Naive thymus-derived CD4-positive, alpha-beta T cell (primary cell): ENCODE measurements at regions of chr4 and their contacts with region 1.

Region 1: DNA sequence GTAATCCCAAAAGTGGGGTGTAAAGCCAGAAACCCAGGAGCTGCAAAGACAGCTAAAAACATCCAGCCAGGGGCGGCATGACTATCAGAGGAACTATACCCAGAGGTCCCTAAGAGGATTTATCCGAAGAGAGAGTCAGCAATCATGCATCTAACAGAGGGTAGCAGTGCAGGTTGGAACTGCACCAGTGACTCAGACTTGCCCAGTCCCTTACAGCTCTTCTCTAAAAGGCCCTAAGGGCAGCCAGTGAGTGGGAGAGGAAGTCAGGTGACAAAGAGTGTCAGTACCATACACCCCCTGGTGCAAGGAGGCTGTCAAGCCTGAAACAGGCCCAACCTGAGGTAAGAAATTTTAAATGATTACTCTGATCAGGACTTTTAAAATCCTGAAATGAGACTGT is 88.1 kb downstream of the CAMK2D start:
- DNase-seq: peak in 1 of 9 donors; percentile 42
- ATAC-seq: peak; percentile 68
- H3K4me3 ChIP-seq: no peak overlapping the region
- H3K4me3 Mint-ChIP-seq: peak overlapping the region in 5 of 10 donors; percentile 11 to 41 (median 34)
- H3K27ac ChIP-seq: no peak overlapping the region
- H3K27ac Mint-ChIP-seq: peak overlapping the region in 3 of 9 donors; percentile 30 to 67 (median 43)
- H3K4me1 ChIP-seq: peaks cover 15 to 21% of the 10 kb centered on the region in 2 donors
- H3K4me1 Mint-ChIP-seq: peaks cover 29 to 68% (median 55%) of the 10 kb centered on the region in 7 donors
- H3K27me3 ChIP-seq: no peaks in the 10 kb centered on the region
- H3K27me3 Mint-ChIP-seq: no peaks in the 10 kb centered on the region

Region 2: DNA sequence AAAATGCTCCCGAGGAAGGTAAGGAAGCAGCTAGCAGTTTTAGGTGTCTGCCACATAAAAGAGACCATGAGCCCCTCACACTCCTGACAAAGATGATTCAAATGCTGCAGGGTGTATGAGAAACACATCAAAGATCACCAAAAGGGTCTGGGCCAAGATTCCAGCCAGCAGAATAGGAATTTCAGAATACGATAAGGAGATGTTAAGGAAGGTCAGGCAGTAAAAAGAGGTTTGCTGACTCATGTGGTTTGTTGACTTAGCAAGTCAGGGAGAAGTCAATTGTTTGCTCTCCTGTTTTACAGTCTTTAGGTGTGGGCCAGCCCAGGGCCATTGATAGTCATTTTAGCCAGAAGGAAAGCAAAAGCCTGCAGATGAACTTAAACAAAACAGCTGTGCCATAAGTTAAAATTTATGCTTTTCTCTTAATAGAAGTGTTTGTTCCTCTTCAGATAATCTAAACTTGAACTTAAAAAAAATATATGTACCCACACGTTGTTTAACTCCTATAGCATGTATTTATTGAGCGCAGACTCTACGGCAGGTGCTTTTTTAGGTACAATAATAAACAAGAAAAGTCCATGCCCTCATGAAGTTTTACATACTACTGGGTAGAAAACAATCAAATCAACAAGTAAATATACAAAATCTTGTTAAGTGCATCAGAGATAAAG is 27.5 kb before region 1 on chr4:
- CTCF ChIA-PET with region 1: no interaction called
- POLR2A ChIA-PET with region 1: no interaction called
- intact Hi-C with region 1: no loop called
- DNase-seq: no peak
- ATAC-seq: no peak
- H3K4me3 ChIP-seq: no peak overlapping the region
- H3K4me3 Mint-ChIP-seq: no peak overlapping the region
- H3K27ac ChIP-seq: no peak overlapping the region
- H3K27ac Mint-ChIP-seq: peak overlapping the region in 3 of 9 donors; percentile 44 to 72 (median 56)
- H3K4me1 ChIP-seq: peaks cover 0 to 4% of the 10 kb centered on the region in 2 donors
- H3K4me1 Mint-ChIP-seq: peaks cover 22 to 55% (median 40%) of the 10 kb centered on the region in 7 donors
- H3K27me3 ChIP-seq: no peaks in the 10 kb centered on the region
- H3K27me3 Mint-ChIP-seq: no peaks in the 10 kb centered on the region

Region 3: GRCh38 chr4:113657586-113658233 is 15.7 kb before region 1 on chr4:
- CTCF ChIA-PET with region 1: interaction called, 3 read pairs
- POLR2A ChIA-PET with region 1: interaction called, 4 read pairs
- intact Hi-C with region 1: loop called in 1 of 2 experiments (anchors 2 kb)
- DNase-seq: no peak
- ATAC-seq: no peak
- H3K4me3 ChIP-seq: no peak overlapping the region
- H3K4me3 Mint-ChIP-seq: no peak overlapping the region
- H3K27ac ChIP-seq: no peak overlapping the region
- H3K27ac Mint-ChIP-seq: no peak overlapping the region
- H3K4me1 ChIP-seq: peaks cover 0 to 4% of the 10 kb centered on the region in 2 donors
- H3K4me1 Mint-ChIP-seq: peaks cover 13 to 51% (median 40%) of the 10 kb centered on the region in 7 donors
- H3K27me3 ChIP-seq: no peaks in the 10 kb centered on the region
- H3K27me3 Mint-ChIP-seq: no peaks in the 10 kb centered on the region

Region 4: GRCh38 chr4:114674080-114674479 is 1000.6 kb after region 1 on chr4:
- CTCF ChIA-PET with region 1: no interaction called
- POLR2A ChIA-PET with region 1: no interaction called
- intact Hi-C with region 1: no loop called
- DNase-seq: no peak
- ATAC-seq: no peak
- H3K4me3 ChIP-seq: no peak overlapping the region
- H3K4me3 Mint-ChIP-seq: no peak overlapping the region
- H3K27ac ChIP-seq: no peak overlapping the region
- H3K27ac Mint-ChIP-seq: no peak overlapping the region
- H3K4me1 ChIP-seq: no peaks in the 10 kb centered on the region
- H3K4me1 Mint-ChIP-seq: no peaks in the 10 kb centered on the region
- H3K27me3 ChIP-seq: no peaks in the 10 kb centered on the region
- H3K27me3 Mint-ChIP-seq: peaks cover 0 to 8% (median 2%) of the 10 kb centered on the region in 5 donors